Gastrocnemius medialis (tissue), 4 donors: ENCODE measurements at regions of chr15 and their contacts with region 1.

Region 1: GRCh38 chr15:43776718-43777583 is at the start of gene ELL3:
- DNase-seq: peak; percentile 40 to 66
- ATAC-seq: peak; percentile 68 to 73
- H3K4me3 ChIP-seq: peak within 1 kb of the TSS; percentile 61 to 84 (median 76)
- H3K27ac ChIP-seq: peak within 1 kb of the TSS; percentile 86 to 90 (median 88)
- H3K4me1 ChIP-seq: peaks cover 9 to 11% of the 10 kb centered on the region in 2 donors
- H3K27me3 ChIP-seq: no peaks in the 10 kb centered on the region
- CTCF ChIP-seq: peak; percentile 62 to 84 (median 66)
- POLR2A ChIP-seq: peak; percentile 26 to 43
- total RNA-seq, gene ELL3: 2.1 to 6.3 (median 2.6) TPM

Region 2: DNA sequence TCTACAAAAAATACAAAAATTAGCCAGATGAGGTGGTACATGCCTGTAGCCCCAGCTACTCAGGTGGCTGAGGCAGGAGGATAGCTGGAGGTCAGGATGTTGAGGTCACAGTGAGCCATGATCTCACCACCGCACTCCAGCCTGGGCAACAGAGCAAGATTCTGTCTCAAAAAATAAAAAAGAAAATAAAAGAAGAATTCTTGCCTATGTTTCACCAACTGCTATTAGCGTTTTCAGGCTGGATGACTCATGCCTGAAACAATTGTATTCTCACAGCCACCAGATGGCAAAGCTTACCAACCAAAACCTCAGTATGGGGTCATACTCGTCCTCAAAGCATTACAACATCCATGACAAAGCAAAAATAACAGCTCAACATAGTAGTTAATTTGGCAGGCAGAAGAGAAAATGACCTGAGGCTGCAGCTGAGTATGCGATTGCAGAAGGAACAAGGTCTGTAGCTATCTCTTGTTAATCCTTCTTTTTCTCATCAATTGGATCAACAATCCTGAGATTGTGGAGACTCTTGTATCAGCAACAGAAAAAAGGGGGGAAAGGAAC is 336.1 kb before region 1 on chr15:
- in situ Hi-C with region 1: no loop called
- intact Hi-C with region 1: loop called (anchors 10 kb)
- DNase-seq: peak; percentile 56 to 58
- ATAC-seq: peak; percentile 100
- H3K4me3 ChIP-seq: no peak overlapping the region
- H3K27ac ChIP-seq: peak overlapping the region; percentile 60 to 77 (median 72)
- H3K4me1 ChIP-seq: peaks cover 11% of the 10 kb centered on the region in 2 donors
- H3K27me3 ChIP-seq: no peaks in the 10 kb centered on the region
- CTCF ChIP-seq: peak; percentile 37 to 60 (median 47)
- POLR2A ChIP-seq: no peak

Region 3: DNA sequence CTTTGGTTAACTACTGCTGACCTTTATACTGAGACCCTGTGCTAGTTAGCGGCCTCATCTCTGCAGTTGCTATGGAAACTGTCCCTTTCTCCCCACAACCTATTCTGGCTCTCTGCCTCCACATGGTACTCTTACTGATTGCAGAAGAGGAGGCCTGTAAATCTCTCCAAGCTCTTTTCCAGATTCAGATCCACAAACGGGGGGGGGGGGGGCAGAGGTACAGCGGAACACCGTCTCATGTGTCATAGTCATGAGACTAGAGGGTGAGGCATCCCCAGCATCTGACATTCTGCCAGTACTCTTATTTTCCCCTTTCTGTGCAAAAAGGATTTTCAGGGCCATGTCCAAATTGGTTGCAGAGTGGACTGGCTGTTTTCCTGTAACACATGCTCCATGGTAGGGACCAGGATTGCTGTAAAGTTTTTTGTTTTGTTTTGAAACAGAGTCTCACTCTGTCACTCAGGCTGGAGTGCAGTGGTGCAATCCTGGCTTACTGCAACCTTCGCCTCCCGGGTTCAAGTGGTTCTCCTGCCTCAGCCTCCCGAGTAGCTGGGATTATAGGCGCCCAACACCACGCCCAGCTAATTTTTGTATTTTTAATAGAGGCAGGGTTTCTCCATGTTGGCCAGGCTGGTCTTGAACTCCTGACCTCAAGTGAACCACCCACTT is 267.8 kb before region 1 on chr15:
- in situ Hi-C with region 1: no loop called
- intact Hi-C with region 1: no loop called
- DNase-seq: peak in 1 of 2 donors; percentile 52
- ATAC-seq: peak; percentile 18 to 27
- H3K4me3 ChIP-seq: peak overlapping the region in 3 of 4 donors; percentile 76 to 90 (median 81)
- H3K27ac ChIP-seq: peak overlapping the region; percentile 84 to 93 (median 92)
- H3K4me1 ChIP-seq: peaks cover 34% of the 10 kb centered on the region in 2 donors
- H3K27me3 ChIP-seq: no peaks in the 10 kb centered on the region
- CTCF ChIP-seq: no peak
- POLR2A ChIP-seq: no peak

Region 4: DNA sequence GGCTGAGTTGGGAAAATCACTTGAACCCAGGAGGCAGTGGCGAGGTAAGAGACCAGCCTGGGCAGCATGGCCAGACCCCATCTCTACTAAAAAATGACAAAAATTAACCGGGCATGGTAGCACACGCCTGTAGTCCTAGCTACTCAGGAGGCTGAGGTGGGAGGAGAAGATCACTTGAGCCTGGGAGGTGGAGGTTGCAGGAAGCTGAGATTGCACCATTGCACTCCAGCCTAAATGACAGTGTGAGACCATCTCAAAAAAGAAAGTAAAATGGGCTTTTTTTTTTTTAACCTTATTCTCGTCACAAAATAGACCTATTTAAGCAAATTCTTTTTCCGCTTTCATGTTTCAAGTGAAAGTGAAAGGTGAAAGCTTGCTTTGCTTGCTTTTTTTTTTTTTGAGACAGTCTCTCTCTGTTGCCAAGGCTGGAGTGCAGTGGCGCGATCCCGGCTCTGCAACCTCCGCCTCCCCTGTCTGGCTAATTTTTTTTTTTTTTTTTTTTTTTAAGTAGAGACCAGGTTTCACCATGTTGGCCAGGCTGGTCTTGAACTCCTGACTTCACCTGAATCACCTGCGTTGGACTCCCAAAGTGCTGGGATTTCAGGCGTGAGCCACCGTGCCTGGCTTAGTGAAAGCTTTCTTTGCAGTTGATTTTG is 27.1 kb before region 1 on chr15:
- in situ Hi-C with region 1: no loop called
- intact Hi-C with region 1: loop called (anchors 2 kb)
- DNase-seq: no peak
- ATAC-seq: no peak
- H3K4me3 ChIP-seq: peak overlapping the region in 1 of 4 donors; percentile 18
- H3K27ac ChIP-seq: peak overlapping the region in 3 of 4 donors; percentile 3 to 34 (median 27)
- H3K4me1 ChIP-seq: peaks cover 20 to 26% of the 10 kb centered on the region in 2 donors
- H3K27me3 ChIP-seq: no peaks in the 10 kb centered on the region
- CTCF ChIP-seq: no peak
- POLR2A ChIP-seq: no peak

Region 5: GRCh38 chr15:43791993-43792760 is 15.2 kb after region 1 on chr15 and contains the start of gene SERF2:
- in situ Hi-C with region 1: no loop called
- intact Hi-C with region 1: loop called (anchors 1 kb)
- DNase-seq: peak; percentile 100
- ATAC-seq: peak; percentile 83 to 91
- H3K4me3 ChIP-seq: peak within 1 kb of the TSS; percentile 91 to 100 (median 94)
- H3K27ac ChIP-seq: peak within 1 kb of the TSS; percentile 96 to 100 (median 99)
- H3K4me1 ChIP-seq: peaks cover 40 to 46% of the 10 kb centered on the region in 2 donors
- H3K27me3 ChIP-seq: no peaks in the 10 kb centered on the region
- CTCF ChIP-seq: no peak
- POLR2A ChIP-seq: peak; percentile 99
- total RNA-seq, gene SERF2: 491 to 646 (median 617) TPM